Tibial artery (tissue), 4 donors: ENCODE measurements at regions of chr2 and their contacts with region 1.

Region 1: DNA sequence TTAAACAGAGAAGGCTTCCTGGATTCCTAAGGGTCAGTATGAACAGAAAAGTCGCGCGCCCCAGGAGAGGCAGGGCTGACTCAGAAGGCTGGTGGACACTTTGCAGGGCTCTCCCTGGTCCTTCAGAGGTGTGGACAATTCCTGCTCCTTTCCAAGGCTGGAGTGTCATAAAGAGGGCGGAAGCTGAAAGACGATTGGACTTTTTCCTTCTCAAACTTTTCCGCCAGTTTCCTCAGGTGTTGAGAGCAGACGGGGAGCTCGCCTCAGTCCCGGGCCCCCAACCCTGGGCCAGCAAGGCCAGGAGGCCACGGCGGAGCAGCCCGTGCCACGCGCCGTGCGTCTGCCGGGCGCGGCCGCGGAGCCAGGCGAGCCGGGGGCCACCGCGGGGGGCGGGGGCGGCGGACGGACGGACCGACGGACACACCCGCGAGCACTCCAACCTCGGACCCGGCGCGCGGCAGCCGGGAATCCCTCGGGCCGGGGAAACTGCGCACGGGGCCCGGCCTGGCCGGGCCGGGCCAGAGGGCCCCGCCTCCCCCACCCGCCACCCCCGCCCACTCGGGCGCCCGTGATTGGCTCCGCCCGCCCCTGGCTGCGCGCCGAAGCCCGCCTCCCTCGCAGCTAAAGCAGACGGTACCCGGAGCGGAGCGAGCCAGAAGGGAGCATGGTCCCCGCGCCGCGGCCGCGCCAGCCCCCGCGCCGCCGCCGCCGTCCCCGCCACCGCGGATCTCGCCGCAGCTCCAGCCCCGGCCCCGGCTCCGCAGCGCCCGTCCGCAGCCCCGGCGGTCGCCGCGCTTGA is at the start of gene KLHL29:
- DNase-seq: peak; percentile 85 to 91
- H3K4me3 ChIP-seq: peak within 1 kb of the TSS; percentile 61 to 75
- H3K27ac ChIP-seq: peak within 1 kb of the TSS; percentile 83 to 85
- H3K4me1 ChIP-seq: peaks cover 0 to 19% (median 10%) of the 10 kb centered on the region in 4 donors
- H3K27me3 ChIP-seq: no peaks in the 10 kb centered on the region
- CTCF ChIP-seq: no peak

Region 2: DNA sequence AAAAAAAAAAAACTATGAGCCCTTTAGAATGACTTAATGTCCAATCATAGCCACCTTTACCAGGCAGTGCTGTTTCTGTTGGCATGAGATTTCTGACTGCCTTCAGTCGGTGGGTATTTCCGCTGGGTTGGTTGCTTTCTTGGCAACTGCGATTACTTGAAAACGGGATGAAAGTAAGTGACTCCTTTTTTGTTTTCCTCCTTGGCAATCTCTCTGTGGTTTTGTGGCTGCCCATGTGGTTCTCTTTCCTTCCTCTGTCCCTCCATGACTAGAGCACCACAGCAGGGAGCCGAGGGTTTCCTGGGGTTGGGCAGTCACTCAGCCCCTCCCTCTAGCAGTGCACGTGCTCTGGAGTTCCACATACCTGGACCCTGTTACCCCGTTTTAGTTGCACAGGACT is 112.3 kb after region 1 on chr2:
- intact Hi-C with region 1: loop called (anchors 5 kb)
- DNase-seq: peak; percentile 64 to 78
- H3K4me3 ChIP-seq: no peak overlapping the region
- H3K27ac ChIP-seq: peak overlapping the region; percentile 57 to 71
- H3K4me1 ChIP-seq: peaks cover 0 to 51% (median 45%) of the 10 kb centered on the region in 4 donors
- H3K27me3 ChIP-seq: no peaks in the 10 kb centered on the region
- CTCF ChIP-seq: no peak

Region 3: DNA sequence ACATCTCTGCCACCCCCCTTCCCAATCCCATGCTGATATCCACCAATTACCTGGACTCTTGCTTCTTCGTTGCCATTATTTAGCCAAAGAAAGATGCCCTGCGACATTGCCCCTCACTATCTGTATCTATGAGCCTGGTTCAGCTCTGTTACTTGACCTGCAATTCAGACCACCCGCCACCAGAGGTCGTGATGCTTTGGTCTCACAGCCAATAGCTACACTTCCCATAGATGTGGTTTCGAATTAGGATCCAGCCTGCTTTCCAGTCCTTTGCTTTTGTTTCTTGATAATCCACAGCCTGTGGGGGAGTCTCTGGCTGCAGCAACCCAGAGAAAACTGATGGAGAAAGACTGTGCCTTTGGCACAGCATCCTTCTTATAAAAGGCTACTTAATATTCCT is 239.6 kb after region 1 on chr2:
- intact Hi-C with region 1: loop called (anchors 10 kb)
- DNase-seq: no peak
- H3K4me3 ChIP-seq: no peak overlapping the region
- H3K27ac ChIP-seq: no peak overlapping the region
- H3K4me1 ChIP-seq: peaks cover 0 to 29% (median 23%) of the 10 kb centered on the region in 4 donors
- H3K27me3 ChIP-seq: no peaks in the 10 kb centered on the region
- CTCF ChIP-seq: peak in 1 of 2 experiments; percentile 24